CD4-positive, alpha-beta memory T cell (primary cell): ENCODE measurements at regions of chr12 and their contacts with region 1.

Region 1: DNA sequence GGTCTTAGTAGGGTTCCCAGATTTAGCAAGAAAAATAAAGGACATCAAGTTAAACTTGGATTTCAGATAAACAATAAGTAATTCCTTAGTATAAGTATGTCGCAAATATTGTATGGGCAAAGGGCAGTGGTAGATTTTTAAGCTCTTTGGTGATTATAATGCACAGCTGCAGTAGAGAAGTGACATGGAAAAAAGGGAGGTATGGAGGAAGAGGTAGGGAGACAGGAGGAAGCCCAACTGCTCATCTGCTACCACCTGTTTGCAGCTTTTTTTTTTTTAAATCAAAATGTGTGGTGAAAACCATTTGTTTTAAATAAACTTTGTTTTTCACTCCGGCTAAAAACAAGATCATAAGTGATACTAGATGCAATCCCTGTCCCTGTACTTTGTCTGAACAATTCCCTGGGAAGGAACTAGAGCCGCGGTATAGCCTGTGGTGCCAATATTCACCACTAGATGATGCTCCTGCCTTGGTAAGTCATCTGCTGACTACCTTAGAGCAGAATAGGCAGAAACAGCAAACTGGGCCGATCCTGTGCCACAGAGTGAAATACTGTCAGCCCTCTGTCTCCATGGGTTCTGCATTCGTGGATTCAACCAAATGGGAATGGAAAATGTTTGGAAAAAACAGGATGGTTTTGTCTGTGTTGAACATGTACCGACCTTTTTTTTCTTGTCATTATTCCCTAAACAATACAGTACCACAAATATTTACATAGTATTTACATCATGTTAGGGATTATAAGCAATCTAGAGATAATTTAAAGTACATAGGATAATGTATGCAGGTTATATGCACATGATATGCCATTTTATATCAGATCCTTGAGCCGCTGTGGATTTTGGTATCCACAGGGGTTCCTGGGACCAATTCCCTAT is 62.4 kb upstream of the PLBD1 start:
- DNase-seq: peak; percentile 60 to 67 (median 65)
- H3K4me3 ChIP-seq: no peak overlapping the region
- H3K4me3 Mint-ChIP-seq: no peak overlapping the region
- H3K27ac ChIP-seq: no peak overlapping the region
- H3K27ac Mint-ChIP-seq: no peak overlapping the region
- H3K4me1 ChIP-seq: no peaks in the 10 kb centered on the region
- H3K4me1 Mint-ChIP-seq: no peaks in the 10 kb centered on the region
- H3K27me3 ChIP-seq: no peaks in the 10 kb centered on the region
- H3K27me3 Mint-ChIP-seq: peaks cover 3 to 5% of the 10 kb centered on the region in 2 donors

Region 2: DNA sequence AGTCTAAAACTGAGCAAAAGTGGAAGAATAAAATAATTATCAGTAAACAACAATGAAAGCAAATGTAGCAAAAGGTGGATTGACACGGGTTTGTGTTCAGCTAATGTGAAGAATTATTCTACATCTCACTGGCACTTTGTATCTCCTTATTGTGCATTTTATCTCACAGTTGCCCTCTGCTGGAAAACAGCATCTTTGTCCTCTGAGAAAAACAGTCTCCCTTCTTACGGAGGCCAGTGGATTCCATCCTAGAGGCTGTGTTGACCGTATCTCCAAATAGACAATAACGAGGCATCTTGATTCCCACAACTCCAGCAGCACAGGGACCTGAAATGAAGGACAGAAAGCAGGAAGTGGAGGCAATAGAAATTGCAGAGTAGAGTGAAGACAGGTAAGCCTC is 11.1 kb before region 1 on chr12:
- CTCF ChIA-PET with region 1: interaction called, 11 read pairs
- POLR2A ChIA-PET with region 1: no interaction called
- intact Hi-C with region 1: no loop called
- DNase-seq: peak in 2 of 5 donors; percentile 16 to 22
- H3K4me3 ChIP-seq: no peak overlapping the region
- H3K4me3 Mint-ChIP-seq: no peak overlapping the region
- H3K27ac ChIP-seq: no peak overlapping the region
- H3K27ac Mint-ChIP-seq: no peak overlapping the region
- H3K4me1 ChIP-seq: no peaks in the 10 kb centered on the region
- H3K4me1 Mint-ChIP-seq: peaks cover 0 to 2% (median 0%) of the 10 kb centered on the region in 4 donors
- H3K27me3 ChIP-seq: no peaks in the 10 kb centered on the region
- H3K27me3 Mint-ChIP-seq: peaks cover 20 to 28% of the 10 kb centered on the region in 2 donors

Region 3: DNA sequence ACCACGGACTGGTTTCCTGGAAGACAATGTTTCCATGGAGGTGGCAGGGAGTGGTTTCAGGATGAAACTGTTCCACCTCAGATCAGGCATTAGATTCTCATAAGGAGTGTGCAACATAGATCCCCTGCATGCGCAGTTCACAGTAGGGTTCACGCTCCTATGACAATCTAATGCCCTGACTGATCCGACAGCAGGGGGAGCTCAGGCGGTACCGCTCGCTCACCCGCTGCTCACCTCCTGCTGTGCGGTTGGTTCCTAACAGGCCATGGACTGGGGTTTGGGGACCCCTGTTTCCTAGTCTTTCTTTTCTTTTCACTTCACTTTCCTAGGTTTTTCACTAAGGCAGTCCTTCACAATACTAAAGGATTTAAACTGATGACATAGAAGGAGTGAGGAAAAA is 26.8 kb after region 1 on chr12:
- CTCF ChIA-PET with region 1: interaction called, 93 read pairs
- POLR2A ChIA-PET with region 1: no interaction called
- intact Hi-C with region 1: no loop called
- DNase-seq: no peak
- H3K4me3 ChIP-seq: no peak overlapping the region
- H3K4me3 Mint-ChIP-seq: no peak overlapping the region
- H3K27ac ChIP-seq: no peak overlapping the region
- H3K27ac Mint-ChIP-seq: no peak overlapping the region
- H3K4me1 ChIP-seq: no peaks in the 10 kb centered on the region
- H3K4me1 Mint-ChIP-seq: no peaks in the 10 kb centered on the region
- H3K27me3 ChIP-seq: no peaks in the 10 kb centered on the region
- H3K27me3 Mint-ChIP-seq: peaks cover 2 to 5% of the 10 kb centered on the region in 2 donors

Region 4: DNA sequence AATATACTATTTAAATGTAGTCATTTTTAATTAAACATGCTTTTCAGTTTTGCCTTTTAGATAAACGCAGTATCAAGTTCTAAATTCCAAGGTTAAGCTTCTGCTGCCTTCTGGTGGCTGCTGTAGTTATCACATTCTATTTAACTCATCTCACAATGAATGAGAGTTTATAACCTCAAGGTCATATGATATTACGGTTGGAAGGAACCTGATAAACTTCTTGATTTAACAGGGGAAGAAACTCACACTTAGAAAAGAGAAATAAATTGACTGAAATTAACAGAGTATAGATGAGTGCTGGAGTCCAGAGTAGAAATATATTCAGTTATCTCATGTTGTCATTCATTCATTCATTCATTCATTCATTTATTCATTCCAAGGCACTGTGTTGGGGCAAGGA is 34.4 kb after region 1 on chr12:
- CTCF ChIA-PET with region 1: interaction called, 93 read pairs
- POLR2A ChIA-PET with region 1: interaction called, 6 read pairs
- intact Hi-C with region 1: loop called (anchors 1 kb)
- DNase-seq: peak; percentile 47 to 57 (median 51)
- H3K4me3 ChIP-seq: no peak overlapping the region
- H3K4me3 Mint-ChIP-seq: no peak overlapping the region
- H3K27ac ChIP-seq: no peak overlapping the region
- H3K27ac Mint-ChIP-seq: no peak overlapping the region
- H3K4me1 ChIP-seq: no peaks in the 10 kb centered on the region
- H3K4me1 Mint-ChIP-seq: peaks cover 0 to 5% (median 3%) of the 10 kb centered on the region in 4 donors
- H3K27me3 ChIP-seq: no peaks in the 10 kb centered on the region
- H3K27me3 Mint-ChIP-seq: peaks cover 2 to 4% of the 10 kb centered on the region in 2 donors

Region 5: DNA sequence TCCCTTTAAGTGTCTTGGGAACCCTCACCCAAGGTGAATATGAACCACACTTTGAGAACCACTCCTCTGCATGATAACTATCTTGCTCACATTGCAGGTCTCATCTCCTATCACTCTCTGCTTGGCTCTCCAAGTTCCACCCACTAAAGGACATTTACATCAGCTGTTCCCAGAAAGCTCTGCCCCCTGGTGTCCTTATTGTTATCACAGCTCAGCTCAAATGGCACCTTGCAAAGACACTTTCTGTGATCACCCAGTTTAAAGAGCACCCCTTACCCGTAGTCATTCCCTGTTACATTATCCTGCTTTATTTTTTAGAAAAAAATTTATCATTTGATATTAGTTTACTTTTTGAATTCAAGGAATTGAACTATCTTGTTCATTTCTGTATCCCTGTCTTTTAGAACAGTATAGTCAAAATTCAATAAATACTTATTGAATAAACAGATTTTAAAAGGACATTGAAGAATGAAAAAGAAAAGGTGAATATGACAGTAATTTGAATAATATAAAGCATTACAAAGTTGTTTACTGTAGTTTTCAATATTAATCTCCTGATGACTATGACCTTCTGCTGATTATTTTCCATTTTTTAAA is 86.9 kb after region 1 on chr12:
- CTCF ChIA-PET with region 1: interaction called, 29 read pairs
- POLR2A ChIA-PET with region 1: no interaction called
- intact Hi-C with region 1: loop called (anchors 1 kb)
- DNase-seq: peak; percentile 46 to 53 (median 48)
- H3K4me3 ChIP-seq: no peak overlapping the region
- H3K4me3 Mint-ChIP-seq: no peak overlapping the region
- H3K27ac ChIP-seq: no peak overlapping the region
- H3K27ac Mint-ChIP-seq: peak overlapping the region in 2 of 7 donors; percentile 8 to 37
- H3K4me1 ChIP-seq: no peaks in the 10 kb centered on the region
- H3K4me1 Mint-ChIP-seq: peaks cover 0 to 2% (median under 1%) of the 10 kb centered on the region in 4 donors
- H3K27me3 ChIP-seq: no peaks in the 10 kb centered on the region
- H3K27me3 Mint-ChIP-seq: peaks cover 4 to 7% of the 10 kb centered on the region in 2 donors

Region 6: GRCh38 chr12:14845350-14845750 is 215.3 kb after region 1 on chr12:
- CTCF ChIA-PET with region 1: no interaction called
- POLR2A ChIA-PET with region 1: no interaction called
- intact Hi-C with region 1: loop called (anchors 10 kb)
- DNase-seq: peak in 4 of 5 donors; percentile 50 to 59 (median 56)
- H3K4me3 ChIP-seq: no peak overlapping the region
- H3K4me3 Mint-ChIP-seq: peak overlapping the region in 1 of 8 donors; percentile 11
- H3K27ac ChIP-seq: no peak overlapping the region
- H3K27ac Mint-ChIP-seq: no peak overlapping the region
- H3K4me1 ChIP-seq: peaks cover 3% of the 10 kb centered on the region
- H3K4me1 Mint-ChIP-seq: peaks cover 0 to 5% (median 1%) of the 10 kb centered on the region in 4 donors
- H3K27me3 ChIP-seq: no peaks in the 10 kb centered on the region
- H3K27me3 Mint-ChIP-seq: no peaks in the 10 kb centered on the region

Region 7: GRCh38 chr12:15268927-15269552 is 639.0 kb after region 1 on chr12:
- CTCF ChIA-PET with region 1: no interaction called
- POLR2A ChIA-PET with region 1: no interaction called
- intact Hi-C with region 1: loop called (anchors 1 kb)
- DNase-seq: peak in 4 of 5 donors; percentile 43 to 55 (median 48)
- H3K4me3 ChIP-seq: no peak overlapping the region
- H3K4me3 Mint-ChIP-seq: no peak overlapping the region
- H3K27ac ChIP-seq: no peak overlapping the region
- H3K27ac Mint-ChIP-seq: no peak overlapping the region
- H3K4me1 ChIP-seq: no peaks in the 10 kb centered on the region
- H3K4me1 Mint-ChIP-seq: no peaks in the 10 kb centered on the region
- H3K27me3 ChIP-seq: no peaks in the 10 kb centered on the region
- H3K27me3 Mint-ChIP-seq: peaks cover 3% of the 10 kb centered on the region in 2 donors